ENCODE measurements at regions of chr1 and their contacts with region 1.

Region 1: GRCh38 chr1:72282271-72283021 is at the start of gene NEGR1:
- DNase-seq: peak; percentile 93
- H3K4me3 ChIP-seq: peak within 1 kb of the TSS; percentile 75 to 91 (median 78)
- H3K27ac ChIP-seq: peak within 1 kb of the TSS; percentile 96
- H3K4me1 ChIP-seq: peaks cover 54% of the 10 kb centered on the region
- H3K27me3 ChIP-seq: no peaks in the 10 kb centered on the region
- CTCF ChIP-seq: no peak
- POLR2A ChIP-seq: no peak
- total RNA-seq, gene NEGR1: 20.2 and 21.8 TPM in 2 replicates

Region 2: DNA sequence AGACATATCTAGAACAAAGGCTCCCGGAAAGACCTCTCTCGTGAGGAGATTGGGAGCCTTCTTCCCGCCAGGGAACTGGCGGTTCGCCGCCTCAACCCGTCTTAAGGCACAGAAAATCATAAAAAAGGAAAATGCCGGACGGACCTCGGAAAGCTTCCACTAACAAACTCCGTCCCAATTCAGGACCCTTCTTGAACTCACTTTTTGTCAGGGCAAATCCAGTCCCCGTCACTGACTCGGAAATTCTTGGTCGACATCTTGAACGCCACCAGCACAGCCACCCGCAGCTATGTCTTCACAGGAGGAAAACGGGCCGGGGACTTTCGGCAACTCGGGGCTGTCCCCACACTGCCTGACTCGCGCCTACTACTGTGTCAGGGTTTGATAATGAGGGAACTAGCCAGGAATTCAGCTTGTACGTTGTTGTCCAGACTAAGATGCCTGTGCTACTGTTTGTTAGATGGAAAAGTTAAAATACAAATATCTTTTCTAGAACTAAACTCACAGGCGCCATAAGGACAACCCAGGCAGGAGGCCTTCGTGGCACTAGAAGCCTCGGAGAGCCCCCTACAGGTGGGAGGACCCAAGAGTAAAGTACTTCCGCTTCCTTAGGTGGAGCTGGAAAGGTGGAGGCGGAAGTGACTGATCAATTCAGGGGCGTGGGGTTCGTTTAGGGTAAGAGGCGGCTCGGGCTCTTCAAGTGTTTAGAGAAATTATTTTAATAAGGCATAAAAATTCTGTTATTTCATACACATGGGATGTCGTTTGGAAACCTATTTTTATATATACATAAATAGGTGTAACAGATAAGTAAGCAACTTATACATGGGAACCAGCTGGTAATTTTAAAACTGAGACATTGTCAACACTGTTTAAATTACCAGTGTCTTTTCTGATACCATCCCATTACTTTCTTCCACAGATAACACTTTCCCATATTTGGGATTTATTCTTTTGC is 1201.4 kb before region 1 on chr1 and contains the start of gene ZRANB2:
- CTCF ChIA-PET with region 1: no interaction called
- POLR2A ChIA-PET with region 1: no interaction called
- dilution Hi-C with region 1: no loop called
- intact Hi-C with region 1: loop called (anchors 1 kb)
- DNase-seq: peak; percentile 94
- H3K4me3 ChIP-seq: peak within 1 kb of the TSS; percentile 59 to 100 (median 95)
- H3K27ac ChIP-seq: peak within 1 kb of the TSS; percentile 96
- H3K4me1 ChIP-seq: peaks cover 18% of the 10 kb centered on the region
- H3K27me3 ChIP-seq: no peaks in the 10 kb centered on the region
- CTCF ChIP-seq: peak; percentile 73 to 78
- POLR2A ChIP-seq: peak; percentile 88
- total RNA-seq, gene ZRANB2: 77.9 and 84.1 TPM in 2 replicates

Region 3: DNA sequence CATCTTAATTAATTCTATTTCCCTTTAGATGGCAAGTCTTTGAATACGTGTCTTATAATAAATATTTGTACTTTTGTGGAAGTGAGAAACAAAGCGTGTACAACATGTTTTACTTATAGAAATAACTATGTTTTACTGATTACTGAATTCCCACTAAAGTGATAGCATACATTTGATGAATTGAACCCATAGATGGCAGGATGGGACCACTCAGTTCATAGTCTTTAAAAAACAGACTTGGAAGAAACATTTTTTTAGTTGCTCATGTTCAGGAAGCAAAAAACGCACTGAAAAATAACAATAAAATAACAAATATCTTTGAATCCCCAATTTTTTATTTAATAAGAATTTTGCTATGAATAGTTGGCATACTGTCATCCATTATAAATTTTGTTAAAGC is 694.5 kb before region 1 on chr1:
- CTCF ChIA-PET with region 1: no interaction called
- POLR2A ChIA-PET with region 1: no interaction called
- dilution Hi-C with region 1: no loop called
- intact Hi-C with region 1: loop called (anchors 5 kb)
- DNase-seq: peak; percentile 60
- H3K4me3 ChIP-seq: no peak overlapping the region
- H3K27ac ChIP-seq: no peak overlapping the region
- H3K4me1 ChIP-seq: no peaks in the 10 kb centered on the region
- H3K27me3 ChIP-seq: no peaks in the 10 kb centered on the region
- CTCF ChIP-seq: no peak
- POLR2A ChIP-seq: no peak

Region 4: DNA sequence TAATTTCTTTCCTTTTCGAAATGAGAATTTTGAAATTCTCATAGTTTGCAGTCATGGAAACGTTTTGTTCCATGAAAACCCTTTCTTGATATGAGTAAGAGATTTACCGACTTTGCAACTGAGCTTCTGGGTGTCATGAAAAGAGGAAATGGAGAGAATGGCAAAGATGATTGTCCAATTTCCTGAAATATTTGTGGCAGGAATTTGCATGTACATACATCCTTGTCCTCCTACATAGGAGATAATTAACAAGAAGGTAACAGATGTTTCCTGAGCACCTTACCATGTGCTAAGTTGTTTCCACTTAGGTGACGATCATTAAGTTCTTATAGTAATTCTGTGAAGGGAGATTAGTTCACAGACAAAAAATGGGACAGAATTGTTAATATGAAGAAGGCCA is 170.8 kb before region 1 on chr1:
- CTCF ChIA-PET with region 1: no interaction called
- POLR2A ChIA-PET with region 1: no interaction called
- dilution Hi-C with region 1: no loop called
- intact Hi-C with region 1: loop called (anchors 5 kb)
- DNase-seq: peak; percentile 47
- H3K4me3 ChIP-seq: no peak overlapping the region
- H3K27ac ChIP-seq: peak overlapping the region; percentile 32
- H3K4me1 ChIP-seq: peaks cover 10% of the 10 kb centered on the region
- H3K27me3 ChIP-seq: no peaks in the 10 kb centered on the region
- CTCF ChIP-seq: no peak
- POLR2A ChIP-seq: no peak

Region 5: DNA sequence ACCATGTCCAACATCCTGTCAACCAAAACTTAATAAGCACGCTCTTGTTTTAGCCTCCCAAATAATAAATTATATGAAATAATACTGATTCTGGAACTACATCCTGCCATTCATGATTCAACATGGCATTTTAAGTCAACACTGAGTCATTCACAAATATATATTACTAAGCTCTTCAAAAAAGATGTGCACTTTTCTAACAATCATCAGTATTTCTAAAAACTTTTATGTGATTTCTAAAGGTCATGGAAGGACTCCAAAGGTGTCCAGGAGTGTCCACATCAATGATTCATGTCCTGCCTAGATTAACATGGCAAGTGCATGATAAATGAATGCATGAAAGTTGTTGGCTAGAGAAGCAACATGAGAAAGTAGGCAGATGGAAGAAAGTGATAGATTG is 51.7 kb before region 1 on chr1:
- CTCF ChIA-PET with region 1: interaction called, 3 read pairs
- POLR2A ChIA-PET with region 1: no interaction called
- dilution Hi-C with region 1: no loop called
- intact Hi-C with region 1: loop called (anchors 2 kb)
- DNase-seq: peak; percentile 67
- H3K4me3 ChIP-seq: no peak overlapping the region
- H3K27ac ChIP-seq: no peak overlapping the region
- H3K4me1 ChIP-seq: peaks cover 10% of the 10 kb centered on the region
- H3K27me3 ChIP-seq: no peaks in the 10 kb centered on the region
- CTCF ChIP-seq: no peak
- POLR2A ChIP-seq: no peak

Region 6: DNA sequence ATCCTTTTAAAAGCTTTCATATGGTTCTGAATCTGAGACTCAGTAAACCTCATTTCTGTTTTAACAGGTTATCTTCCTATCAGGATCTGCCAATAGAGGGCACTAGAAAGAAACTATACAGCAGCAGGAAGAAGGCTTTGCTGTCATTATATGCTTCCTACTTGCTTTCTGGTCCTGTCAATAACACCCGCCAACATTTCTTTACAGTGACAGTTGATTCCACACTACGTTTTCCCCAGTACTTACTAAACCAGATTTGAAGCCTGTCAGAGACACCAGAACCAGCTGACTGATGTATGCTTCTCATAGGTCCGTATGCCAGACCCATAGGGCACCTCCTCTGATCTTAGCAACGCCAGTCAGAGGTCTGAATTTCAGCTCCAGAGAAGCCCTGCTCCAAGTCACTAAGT is 340.9 kb after region 1 on chr1:
- CTCF ChIA-PET with region 1: interaction called, 7 read pairs
- POLR2A ChIA-PET with region 1: no interaction called
- dilution Hi-C with region 1: no loop called
- intact Hi-C with region 1: loop called (anchors 1 kb)
- DNase-seq: peak; percentile 70
- H3K4me3 ChIP-seq: no peak overlapping the region
- H3K27ac ChIP-seq: no peak overlapping the region
- H3K4me1 ChIP-seq: peaks cover 10% of the 10 kb centered on the region
- H3K27me3 ChIP-seq: no peaks in the 10 kb centered on the region
- CTCF ChIP-seq: peak; percentile 25 to 56
- POLR2A ChIP-seq: no peak

Region 7: DNA sequence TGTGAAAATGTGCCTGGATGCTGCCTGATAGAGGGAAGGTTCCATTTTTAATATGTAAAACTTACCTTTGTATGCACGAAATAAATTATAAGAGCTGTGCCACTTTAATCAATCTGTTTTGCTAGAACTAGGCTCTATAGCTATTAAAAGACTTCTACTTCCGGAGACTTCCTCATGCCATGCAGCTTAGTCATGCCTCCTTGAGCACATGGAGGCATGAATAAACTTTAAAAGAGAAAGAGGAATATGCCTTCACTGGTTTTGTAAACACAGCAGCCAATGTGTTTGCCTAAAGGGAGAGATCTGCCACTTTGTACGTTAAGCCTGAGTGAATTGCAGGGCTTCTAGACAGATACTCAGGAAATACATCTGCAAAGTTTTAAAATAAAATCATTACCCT is 1310.9 kb after region 1 on chr1:
- CTCF ChIA-PET with region 1: no interaction called
- POLR2A ChIA-PET with region 1: no interaction called
- dilution Hi-C with region 1: no loop called
- intact Hi-C with region 1: loop called (anchors 10 kb)
- DNase-seq: peak; percentile 83
- H3K4me3 ChIP-seq: peak overlapping the region in 1 of 3 experiments; percentile 21
- H3K27ac ChIP-seq: peak overlapping the region; percentile 74
- H3K4me1 ChIP-seq: peaks cover 17% of the 10 kb centered on the region
- H3K27me3 ChIP-seq: no peaks in the 10 kb centered on the region
- CTCF ChIP-seq: no peak
- POLR2A ChIP-seq: no peak

Measured in endothelial cell of umbilical vein (primary cell).